ENCODE measurements at regions of chr6 and their contacts with region 1.

Region 1: DNA sequence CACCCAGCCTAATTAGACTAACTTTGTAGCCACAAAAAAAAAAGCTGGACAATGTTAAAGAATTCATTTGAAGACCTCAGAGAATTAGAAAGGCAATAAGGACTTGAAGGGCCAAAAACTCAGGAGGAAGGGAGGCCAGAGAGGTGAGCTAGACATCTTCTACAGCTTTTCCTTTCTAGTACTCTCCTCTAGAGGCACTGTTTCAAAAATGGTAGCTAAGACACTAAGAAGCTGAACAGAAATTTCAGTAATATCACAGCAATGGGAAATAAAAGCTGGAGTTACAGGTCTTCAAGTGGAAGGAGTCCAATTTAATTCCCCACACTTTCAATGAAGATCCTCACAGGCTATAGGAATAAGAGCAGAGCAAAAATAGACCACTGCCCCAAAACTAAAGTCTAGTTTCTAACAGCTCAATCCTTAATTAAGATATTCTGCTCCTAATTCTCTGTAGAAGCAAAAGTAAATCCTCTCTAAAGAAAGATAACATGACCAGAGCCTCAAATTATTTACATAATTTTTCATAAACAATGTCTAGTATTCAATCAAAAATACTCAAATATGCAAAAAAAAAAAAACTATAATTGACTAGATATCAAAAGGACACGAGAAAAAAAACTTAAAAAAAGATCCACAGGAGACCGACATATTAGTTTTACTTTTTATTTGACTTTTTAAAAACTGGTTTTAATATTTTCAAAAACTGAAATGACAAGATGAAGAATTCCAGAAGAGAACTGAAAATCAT is 63.7 kb downstream of the RNGTT start:
- DNase-seq: no peak
- ATAC-seq: no peak
- H3K4me3 Mint-ChIP-seq: no peak overlapping the region
- H3K27ac Mint-ChIP-seq: no peak overlapping the region
- H3K4me1 Mint-ChIP-seq: peaks cover 1% of the 10 kb centered on the region
- H3K27me3 Mint-ChIP-seq: no peaks in the 10 kb centered on the region
- CTCF ChIP-seq: no peak

Region 2: DNA sequence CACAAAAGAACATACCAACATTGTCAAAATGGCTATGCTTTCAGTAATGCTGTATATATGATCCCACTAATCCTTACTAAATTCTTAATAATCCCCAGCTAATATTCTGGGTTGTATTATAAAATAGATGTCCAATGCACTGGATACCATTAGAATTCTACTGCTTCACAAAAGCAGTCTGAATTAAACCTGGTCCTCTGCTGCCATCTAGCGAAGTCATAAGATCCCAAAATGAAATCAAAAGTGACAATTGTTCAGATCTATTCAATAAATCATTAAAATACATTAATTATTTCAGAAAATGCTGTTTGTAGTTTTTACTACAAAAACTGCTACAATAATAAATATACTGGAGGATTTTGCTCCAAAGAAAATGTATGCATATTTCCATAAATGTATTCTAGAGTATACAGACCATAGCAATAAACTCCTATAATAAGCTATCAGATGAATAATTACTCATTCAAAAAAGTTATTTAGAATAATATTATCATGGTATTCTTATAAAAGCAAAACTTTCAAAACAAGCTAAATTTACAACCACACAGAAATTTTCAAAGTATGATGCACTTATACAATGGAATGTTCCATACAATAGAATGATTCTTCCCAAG is 28.9 kb before region 1 on chr6:
- CTCF ChIA-PET with region 1: interaction called, 10 read pairs
- POLR2A ChIA-PET with region 1: no interaction called
- intact Hi-C with region 1: no loop called
- DNase-seq: peak; percentile 56
- ATAC-seq: no peak
- H3K4me3 Mint-ChIP-seq: no peak overlapping the region
- H3K27ac Mint-ChIP-seq: no peak overlapping the region
- H3K4me1 Mint-ChIP-seq: peaks cover 24% of the 10 kb centered on the region
- H3K27me3 Mint-ChIP-seq: no peaks in the 10 kb centered on the region
- CTCF ChIP-seq: peak; percentile 84

Region 3: DNA sequence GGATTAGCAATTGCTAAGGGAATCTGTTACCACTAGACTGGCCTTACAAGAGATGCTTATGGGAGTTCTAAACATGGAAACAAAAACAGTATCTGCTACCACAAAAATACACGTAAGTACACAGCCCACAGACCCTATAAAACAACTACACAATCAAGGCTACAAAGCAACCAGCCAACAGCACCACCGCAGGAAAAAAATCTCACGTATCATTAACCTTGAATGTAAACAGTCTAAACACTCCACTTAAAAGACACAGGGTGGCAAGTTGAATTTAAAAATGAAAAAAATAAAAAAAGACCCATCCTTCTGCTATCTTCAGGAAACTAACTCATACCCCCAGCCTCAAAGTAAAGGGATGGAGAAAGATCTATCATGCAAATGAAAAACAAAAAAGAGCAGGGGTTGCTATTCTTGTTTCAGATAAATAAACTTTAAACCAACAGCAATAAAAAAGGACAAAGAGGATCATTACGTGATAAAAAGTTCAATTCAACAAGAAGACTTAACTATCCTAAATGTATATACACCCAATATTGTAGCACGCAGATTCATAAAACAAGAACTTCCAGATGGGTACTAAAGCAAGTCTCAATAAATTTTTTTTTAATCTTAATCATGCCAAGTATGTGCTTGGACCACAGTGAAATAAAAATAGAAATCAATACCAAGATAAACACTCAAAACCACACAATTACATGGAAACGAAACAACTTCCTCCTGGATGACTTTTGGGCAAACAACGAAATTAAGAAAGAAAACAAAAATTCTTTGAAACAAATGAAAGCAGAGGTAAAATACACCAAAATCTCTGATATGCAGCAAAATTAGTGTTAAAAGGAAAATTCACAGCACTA is 11.4 kb after region 1 on chr6:
- CTCF ChIA-PET with region 1: no interaction called
- POLR2A ChIA-PET with region 1: no interaction called
- intact Hi-C with region 1: no loop called
- DNase-seq: no peak
- ATAC-seq: no peak
- H3K4me3 Mint-ChIP-seq: no peak overlapping the region
- H3K27ac Mint-ChIP-seq: no peak overlapping the region
- H3K4me1 Mint-ChIP-seq: peaks cover 57% of the 10 kb centered on the region
- H3K27me3 Mint-ChIP-seq: no peaks in the 10 kb centered on the region
- CTCF ChIP-seq: no peak

Region 4: GRCh38 chr6:89110284-89110683 is 210.5 kb after region 1 on chr6:
- CTCF ChIA-PET with region 1: no interaction called
- POLR2A ChIA-PET with region 1: no interaction called
- intact Hi-C with region 1: no loop called
- DNase-seq: no peak
- ATAC-seq: no peak
- H3K4me3 Mint-ChIP-seq: no peak overlapping the region
- H3K27ac Mint-ChIP-seq: no peak overlapping the region
- H3K4me1 Mint-ChIP-seq: no peaks in the 10 kb centered on the region
- H3K27me3 Mint-ChIP-seq: no peaks in the 10 kb centered on the region
- CTCF ChIP-seq: no peak